Head of caudate nucleus (tissue), 42 donors: ENCODE measurements at regions of chr6 and their contacts with region 1.

Region 1: DNA sequence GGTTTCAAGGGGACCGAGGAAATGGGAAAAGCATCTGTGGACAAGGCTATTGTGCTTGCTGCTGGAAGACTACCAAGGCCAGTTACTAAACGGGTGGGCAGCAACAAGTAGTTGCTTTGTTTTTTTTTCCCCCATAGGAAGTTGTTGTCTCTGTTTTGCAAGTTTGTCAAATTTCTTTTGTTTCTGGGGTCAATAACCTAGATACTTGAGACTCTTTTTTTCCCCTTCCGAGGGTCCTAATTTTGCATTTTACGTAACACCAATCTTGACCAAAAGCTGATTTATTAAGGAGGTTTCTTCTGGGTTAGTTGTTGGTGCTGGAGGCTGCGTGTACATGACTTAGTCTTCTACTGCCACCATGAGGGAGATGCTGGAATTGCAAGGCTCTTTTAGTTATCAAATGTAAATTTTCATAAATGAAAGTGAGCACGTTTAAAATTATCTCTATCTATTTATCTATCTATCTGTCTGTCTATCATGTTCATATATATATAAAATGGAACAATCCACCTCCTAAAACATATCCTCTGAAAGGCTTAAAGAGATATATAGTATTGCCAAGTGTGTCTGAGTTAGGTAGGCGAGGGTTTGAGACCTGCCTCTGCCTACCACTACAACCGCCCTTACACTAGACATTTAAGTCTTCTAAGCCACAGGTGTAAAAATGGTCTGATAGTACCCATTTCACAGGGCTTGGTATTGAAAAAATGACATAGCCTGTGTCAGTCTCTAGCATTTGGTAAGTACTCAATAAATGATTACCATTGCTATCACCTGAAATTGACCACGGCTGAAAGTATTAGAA is 60.2 kb downstream of the GCLC start:
- DNase-seq: peak in 40 of 42 donors; percentile 31 to 96 (median 82)

Region 2: GRCh38 chr6:52995913-52996645 is 488.6 kb before region 1 on chr6:
- intact Hi-C with region 1: loop called (anchors 10 kb)
- DNase-seq: peak in 33 of 42 donors; percentile 16 to 68 (median 42)

Region 3: DNA sequence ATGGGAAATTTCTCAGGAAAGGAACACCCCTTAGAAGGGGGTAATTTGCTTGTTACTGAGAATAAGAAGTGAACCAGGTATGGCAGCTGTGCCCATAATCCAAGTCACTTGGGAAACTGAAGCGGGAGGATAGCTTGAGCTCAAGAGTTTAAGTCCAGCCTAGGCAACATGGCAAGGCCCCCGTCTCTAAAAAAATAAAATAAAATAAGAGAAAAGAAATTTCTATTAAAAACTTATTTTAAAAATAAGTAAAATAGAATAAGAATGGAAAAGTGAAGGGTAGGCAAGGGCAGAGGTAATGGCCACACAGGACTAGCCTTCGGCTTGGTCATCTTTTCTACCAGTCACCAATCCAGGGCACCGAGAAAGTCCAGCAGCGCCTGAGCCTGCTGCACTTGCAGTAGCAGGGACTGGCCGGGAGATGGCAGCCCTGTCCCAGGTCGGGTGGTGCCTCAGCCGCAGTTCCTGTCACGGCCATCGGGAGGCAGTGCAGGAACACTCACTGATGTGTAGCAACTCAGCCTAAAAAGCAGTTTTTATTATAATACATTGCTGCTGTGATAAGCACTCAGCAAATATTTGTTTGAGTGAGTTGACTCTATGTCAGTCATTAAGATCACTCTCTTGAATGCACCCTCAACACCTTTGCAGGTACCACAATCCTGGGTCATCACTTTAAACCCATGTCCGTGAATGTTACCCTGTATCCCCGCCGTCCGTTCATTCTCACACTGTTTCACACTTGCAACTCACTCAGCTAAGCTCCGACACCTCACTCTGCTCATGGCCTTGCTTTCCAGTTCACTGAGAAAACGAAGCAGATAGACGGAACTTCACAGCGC is 312.9 kb before region 1 on chr6:
- intact Hi-C with region 1: loop called (anchors 2 kb)
- DNase-seq: peak; percentile 76 to 98 (median 93)

Region 4: GRCh38 chr6:53359072-53359842 is 125.4 kb before region 1 on chr6:
- intact Hi-C with region 1: loop called (anchors 5 kb)
- DNase-seq: peak; percentile 93 to 99 (median 98)

Region 5: DNA sequence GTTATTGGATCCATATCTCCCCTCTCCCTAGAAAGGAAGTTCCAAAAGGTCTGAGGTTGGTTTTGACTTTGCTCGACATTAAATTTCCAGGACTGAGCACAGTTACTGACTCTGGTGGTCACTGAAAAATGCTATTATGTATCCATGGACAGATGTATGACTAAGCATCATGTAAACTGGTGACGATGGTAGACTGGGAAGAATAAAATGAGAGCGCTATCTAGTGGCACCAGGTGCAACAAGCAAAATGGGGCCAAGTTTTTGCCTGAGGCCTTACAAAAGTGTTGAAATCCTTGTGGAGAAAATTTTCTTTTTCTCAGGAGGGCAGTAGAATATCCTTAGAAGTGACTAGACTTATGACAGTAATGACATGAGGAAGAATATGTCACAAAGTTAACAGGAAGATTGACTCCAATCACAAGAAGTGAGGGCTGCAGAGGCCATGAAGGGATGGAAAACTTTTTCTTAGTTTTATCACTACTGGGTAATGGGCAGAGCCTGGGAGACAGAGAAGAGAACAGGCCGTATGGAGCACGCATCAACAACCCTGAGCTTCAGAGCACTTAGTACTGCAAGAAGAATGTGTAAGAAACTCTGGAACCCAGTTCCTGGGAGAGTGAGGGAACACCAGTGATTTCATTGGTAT is 47.0 kb before region 1 on chr6:
- intact Hi-C with region 1: loop called (anchors 5 kb)
- DNase-seq: peak in 29 of 42 donors; percentile 13 to 80 (median 46)